Ascending aorta (tissue), 2 donors: ENCODE measurements at regions of chr12 and their contacts with region 1.

Region 1: DNA sequence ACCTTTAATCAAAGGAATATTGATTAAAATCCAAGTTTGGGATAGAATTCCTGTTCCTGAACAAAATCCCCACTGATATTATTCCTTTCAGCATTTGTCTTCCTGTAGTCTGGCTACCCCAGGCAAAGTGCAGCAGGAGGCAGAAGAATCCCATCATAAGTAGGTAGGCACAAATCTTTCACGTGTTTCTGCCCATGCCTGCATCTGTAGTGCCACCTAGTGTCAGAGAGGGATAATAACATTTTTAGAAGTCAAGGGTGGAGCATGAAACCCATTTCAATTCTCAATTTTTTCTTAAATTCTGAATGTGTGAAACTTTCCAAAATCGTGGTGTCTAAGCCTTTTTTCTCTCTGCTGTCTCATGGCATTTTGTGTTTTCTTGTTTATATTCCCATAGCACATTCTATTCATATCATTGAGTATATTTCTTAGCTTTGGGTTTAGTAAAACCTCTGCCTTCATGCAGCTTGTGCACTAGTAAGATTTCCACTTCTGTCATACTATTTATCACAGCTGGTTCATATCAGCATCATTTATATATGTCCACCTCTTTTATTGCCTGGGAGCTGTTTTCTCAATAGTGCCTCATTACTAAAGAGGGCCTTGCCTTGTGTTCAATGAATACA is 47.8 kb upstream of the RERG start:
- DNase-seq: peak in 1 of 2 donors; percentile 69
- H3K4me3 ChIP-seq: no peak overlapping the region
- H3K27ac ChIP-seq: no peak overlapping the region
- H3K4me1 ChIP-seq: peaks cover 0 to 4% of the 10 kb centered on the region in 2 donors
- H3K27me3 ChIP-seq: no peaks in the 10 kb centered on the region
- CTCF ChIP-seq: peak; percentile 77 to 86 (median 81)

Region 2: GRCh38 chr12:14723763-14724162 is 545.3 kb before region 1 on chr12:
- intact Hi-C with region 1: loop called (anchors 10 kb)
- DNase-seq: peak in 1 of 2 donors; percentile 65
- H3K4me3 ChIP-seq: no peak overlapping the region
- H3K27ac ChIP-seq: no peak overlapping the region
- H3K4me1 ChIP-seq: no peaks in the 10 kb centered on the region
- H3K27me3 ChIP-seq: no peaks in the 10 kb centered on the region
- CTCF ChIP-seq: peak; percentile 47 to 71 (median 66)

Region 3: DNA sequence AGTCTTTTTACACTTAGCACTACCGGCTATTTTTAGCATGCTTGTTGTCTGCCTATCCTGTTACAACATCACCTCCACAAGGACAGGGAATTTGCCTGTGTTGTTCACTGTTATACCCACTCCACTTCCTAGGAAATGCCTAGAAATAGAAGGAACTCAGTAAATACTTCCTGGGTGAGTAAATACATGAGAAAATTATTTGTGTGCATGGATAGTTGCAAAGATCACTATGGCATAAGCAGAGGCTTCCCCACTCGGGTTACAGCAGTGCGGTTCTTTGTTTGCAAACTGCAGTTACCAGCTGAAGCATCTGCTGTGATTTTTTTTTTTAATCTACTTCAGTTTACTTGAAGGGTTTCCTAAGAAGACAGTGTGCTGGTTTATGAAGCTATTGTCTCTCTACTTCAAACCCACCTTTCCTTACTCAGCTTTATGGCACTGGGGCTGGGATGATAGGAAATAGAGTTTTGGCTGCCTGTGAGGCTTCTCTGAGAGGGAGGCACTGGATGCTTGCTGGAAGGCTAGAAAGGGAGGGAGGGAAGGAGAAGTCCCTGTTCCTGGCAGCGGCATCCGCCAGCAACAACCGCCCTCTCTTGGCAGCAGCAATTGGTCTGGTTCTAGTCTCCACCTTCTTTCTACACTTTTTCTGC is 267.2 kb before region 1 on chr12:
- intact Hi-C with region 1: loop called (anchors 5 kb)
- DNase-seq: peak in 1 of 2 donors; percentile 77
- H3K4me3 ChIP-seq: peak overlapping the region; percentile 6 to 18
- H3K27ac ChIP-seq: no peak overlapping the region
- H3K4me1 ChIP-seq: peaks cover 3 to 8% of the 10 kb centered on the region in 2 donors
- H3K27me3 ChIP-seq: no peaks in the 10 kb centered on the region
- CTCF ChIP-seq: no peak

Region 4: DNA sequence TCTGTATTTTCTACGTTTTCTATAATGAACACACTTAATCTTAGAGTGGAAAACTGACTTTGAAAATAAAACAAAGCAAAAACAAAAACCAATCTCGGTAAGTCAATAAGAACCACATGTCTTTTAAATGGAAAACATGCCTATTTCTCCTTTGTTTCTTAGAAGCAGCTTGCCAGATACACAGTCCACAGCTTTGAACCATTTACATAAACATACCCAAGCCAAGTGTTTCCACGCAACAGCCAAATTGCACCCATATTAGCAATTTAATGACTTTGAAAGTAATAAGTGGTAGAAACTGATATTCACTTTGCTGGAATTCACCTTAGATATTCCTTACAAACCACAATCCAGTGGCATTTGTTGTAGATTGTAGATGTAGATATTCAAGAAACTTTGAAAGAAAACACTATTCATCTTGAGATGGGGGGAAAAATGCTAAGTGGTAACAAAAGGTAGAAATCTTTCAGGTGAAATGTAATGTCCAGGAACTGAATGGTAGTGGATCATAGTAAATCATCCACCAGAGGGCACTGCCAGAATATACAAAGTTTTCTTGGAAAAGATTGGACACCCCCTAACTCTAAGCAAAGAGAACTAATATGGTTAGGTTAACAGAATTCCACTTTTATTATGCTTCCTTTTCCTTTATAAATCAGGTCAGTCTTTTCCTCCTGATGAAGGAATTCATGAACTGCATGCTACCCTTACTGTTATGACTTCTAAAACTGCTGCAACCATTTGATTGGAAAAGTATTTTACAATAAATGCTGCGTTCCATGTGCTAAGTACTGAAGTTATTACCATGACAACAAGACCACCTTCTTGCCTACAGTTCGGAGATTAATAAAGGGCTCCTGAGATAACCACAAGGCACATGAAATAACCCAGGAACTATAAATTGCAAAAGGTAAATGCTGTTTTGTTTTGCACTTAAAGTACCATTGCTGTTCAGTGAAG is 117.6 kb before region 1 on chr12:
- intact Hi-C with region 1: loop called (anchors 1 kb)
- DNase-seq: no peak
- H3K4me3 ChIP-seq: peak overlapping the region in 1 of 2 donors; percentile 42
- H3K27ac ChIP-seq: peak overlapping the region; percentile 74 to 81
- H3K4me1 ChIP-seq: peaks cover 23 to 41% of the 10 kb centered on the region in 2 donors
- H3K27me3 ChIP-seq: no peaks in the 10 kb centered on the region
- CTCF ChIP-seq: peak; percentile 35 to 59 (median 48)

Region 5: GRCh38 chr12:15227004-15227679 is 41.9 kb before region 1 on chr12:
- intact Hi-C with region 1: loop called (anchors 2 kb)
- DNase-seq: peak in 1 of 2 donors; percentile 76
- H3K4me3 ChIP-seq: no peak overlapping the region
- H3K27ac ChIP-seq: no peak overlapping the region
- H3K4me1 ChIP-seq: peaks cover 0 to under 1% of the 10 kb centered on the region in 2 donors
- H3K27me3 ChIP-seq: no peaks in the 10 kb centered on the region
- CTCF ChIP-seq: peak; percentile 42 to 70 (median 57)